ENCODE measurements at regions of chr18 and their contacts with region 1.

Region 1: DNA sequence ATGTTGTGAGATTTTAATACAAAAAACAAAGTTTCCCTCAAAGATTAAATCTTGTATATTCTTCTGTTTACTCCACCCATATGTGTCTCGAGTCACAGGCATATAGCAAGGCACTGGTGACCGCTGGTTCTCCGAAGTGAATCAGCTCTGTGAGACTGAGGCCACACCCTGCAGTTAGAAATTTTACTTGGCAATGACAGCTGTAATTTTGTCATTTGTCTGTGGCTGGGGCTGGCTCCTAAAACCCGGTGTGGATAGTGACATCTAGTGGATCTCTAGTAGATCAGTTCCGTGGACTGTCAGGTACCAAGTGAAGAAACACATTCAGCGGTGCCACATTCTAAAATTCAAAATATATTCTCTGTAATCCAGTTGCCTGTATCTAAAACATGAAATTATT is 278.0 kb downstream of the NEDD4L start:
- DNase-seq: peak; percentile 45 to 72 (median 70)
- H3K4me3 ChIP-seq: no peak overlapping the region
- H3K4me3 Mint-ChIP-seq: peak overlapping the region in 7 of 8 donors; percentile 36 to 88 (median 72)
- H3K27ac ChIP-seq: no peak overlapping the region
- H3K27ac Mint-ChIP-seq: peak overlapping the region; percentile 26 to 92 (median 53)
- H3K4me1 ChIP-seq: peaks cover 11% of the 10 kb centered on the region
- H3K4me1 Mint-ChIP-seq: peaks cover 12 to 21% (median 17%) of the 10 kb centered on the region in 4 donors
- H3K27me3 ChIP-seq: no peaks in the 10 kb centered on the region
- H3K27me3 Mint-ChIP-seq: peaks cover 4% of the 10 kb centered on the region in 2 donors

Region 2: DNA sequence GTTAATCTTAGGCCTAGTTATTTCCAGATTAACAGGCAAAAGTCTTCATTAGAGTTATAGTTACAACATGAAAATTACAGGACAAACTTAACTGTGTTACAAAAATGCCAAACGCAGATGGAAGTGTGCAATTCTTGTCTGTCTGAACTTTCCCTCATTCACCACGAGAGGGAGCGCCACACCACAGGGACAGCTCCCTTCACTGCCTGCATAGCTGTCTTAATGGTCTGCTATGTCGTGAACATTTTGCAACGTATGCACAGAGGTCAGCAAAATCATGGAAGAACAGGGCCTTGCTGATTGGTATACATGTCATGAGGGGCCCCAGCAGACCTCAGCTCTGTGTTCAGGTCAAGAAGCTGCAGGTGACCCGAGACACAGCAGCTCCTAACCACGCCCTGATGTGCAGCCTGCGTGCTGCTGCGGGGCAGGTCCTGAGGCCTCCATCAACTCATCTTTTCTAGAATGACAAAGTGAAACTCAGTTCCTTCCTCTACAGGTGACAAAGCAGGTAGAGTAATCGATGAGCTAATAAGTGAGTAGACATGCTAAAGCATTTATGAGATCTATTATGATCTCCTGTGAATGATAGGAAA is 440.1 kb before region 1 on chr18:
- CTCF ChIA-PET with region 1: no interaction called
- POLR2A ChIA-PET with region 1: no interaction called
- intact Hi-C with region 1: loop called (anchors 10 kb)
- DNase-seq: peak in 4 of 5 donors; percentile 19 to 38 (median 30)
- H3K4me3 ChIP-seq: no peak overlapping the region
- H3K4me3 Mint-ChIP-seq: no peak overlapping the region
- H3K27ac ChIP-seq: no peak overlapping the region
- H3K27ac Mint-ChIP-seq: no peak overlapping the region
- H3K4me1 ChIP-seq: no peaks in the 10 kb centered on the region
- H3K4me1 Mint-ChIP-seq: peaks cover 0 to 3% (median 0%) of the 10 kb centered on the region in 4 donors
- H3K27me3 ChIP-seq: no peaks in the 10 kb centered on the region
- H3K27me3 Mint-ChIP-seq: peaks cover 2 to 11% of the 10 kb centered on the region in 2 donors

Region 3: DNA sequence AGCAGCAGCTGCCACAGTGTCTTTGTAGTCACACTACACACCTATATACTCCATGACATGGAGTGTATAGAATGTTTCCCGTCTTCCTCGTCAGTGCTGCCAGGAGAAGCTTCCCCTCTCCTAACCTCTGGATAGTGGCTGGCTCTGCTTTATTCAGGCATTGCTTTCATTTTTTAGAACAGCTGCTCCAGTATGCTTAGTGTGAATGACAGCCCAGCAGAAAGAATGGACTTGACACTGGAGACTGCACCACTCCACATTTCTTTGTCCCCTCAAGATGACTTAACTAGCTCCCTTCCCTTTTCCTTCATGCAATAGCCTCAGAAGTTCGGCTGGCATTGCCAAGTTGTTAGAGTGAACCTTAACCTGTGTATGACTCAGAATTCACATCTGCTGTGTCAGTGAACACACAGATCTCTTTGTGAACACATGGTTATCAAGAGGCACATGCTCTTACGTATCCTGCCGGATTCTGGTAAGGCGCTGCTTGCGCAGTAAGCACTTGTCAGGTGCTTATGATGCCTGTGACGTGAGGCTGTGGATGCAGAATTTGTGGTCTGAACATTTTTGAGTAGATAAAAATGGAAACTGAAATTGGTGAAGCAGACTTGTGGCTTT is 204.1 kb before region 1 on chr18:
- CTCF ChIA-PET with region 1: no interaction called
- POLR2A ChIA-PET with region 1: no interaction called
- intact Hi-C with region 1: loop called (anchors 1 kb)
- DNase-seq: no peak
- H3K4me3 ChIP-seq: no peak overlapping the region
- H3K4me3 Mint-ChIP-seq: no peak overlapping the region
- H3K27ac ChIP-seq: no peak overlapping the region
- H3K27ac Mint-ChIP-seq: no peak overlapping the region
- H3K4me1 ChIP-seq: no peaks in the 10 kb centered on the region
- H3K4me1 Mint-ChIP-seq: peaks cover 0 to 2% (median 0%) of the 10 kb centered on the region in 4 donors
- H3K27me3 ChIP-seq: no peaks in the 10 kb centered on the region
- H3K27me3 Mint-ChIP-seq: peaks cover 5 to 12% of the 10 kb centered on the region in 2 donors

Region 4: DNA sequence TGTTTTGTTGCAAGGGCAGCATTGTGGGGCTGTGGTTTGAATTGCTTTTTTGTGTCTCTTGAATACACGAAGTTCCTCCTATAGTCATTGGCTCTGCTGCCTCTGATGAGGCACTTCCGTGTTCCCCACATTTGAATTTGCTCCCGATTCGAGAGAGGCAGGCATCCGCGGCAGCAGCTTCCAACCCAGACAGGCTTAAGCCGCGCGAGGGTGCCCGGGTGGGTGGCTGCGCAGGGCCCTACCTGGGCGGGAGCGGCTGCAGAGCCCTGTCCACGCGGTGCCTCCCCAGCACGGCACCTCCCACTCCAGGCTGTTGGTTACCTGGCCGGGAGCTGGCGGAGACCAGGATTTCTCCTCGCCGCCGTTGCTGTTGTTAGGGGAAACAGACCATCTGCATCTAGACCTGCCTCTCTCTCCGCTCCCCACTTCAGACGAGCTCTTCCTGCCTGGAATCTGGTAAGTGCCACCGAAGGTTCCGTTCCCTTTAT is 126.7 kb before region 1 on chr18:
- CTCF ChIA-PET with region 1: no interaction called
- POLR2A ChIA-PET with region 1: no interaction called
- intact Hi-C with region 1: loop called (anchors 5 kb)
- DNase-seq: peak; percentile 11 to 37 (median 22)
- H3K4me3 ChIP-seq: peak overlapping the region in 1 of 2 donors; percentile 37
- H3K4me3 Mint-ChIP-seq: peak overlapping the region; percentile 76 to 91 (median 84)
- H3K27ac ChIP-seq: no peak overlapping the region
- H3K27ac Mint-ChIP-seq: peak overlapping the region in 3 of 7 donors; percentile 76 to 85 (median 77)
- H3K4me1 ChIP-seq: no peaks in the 10 kb centered on the region
- H3K4me1 Mint-ChIP-seq: peaks cover 6 to 27% (median 14%) of the 10 kb centered on the region in 4 donors
- H3K27me3 ChIP-seq: no peaks in the 10 kb centered on the region
- H3K27me3 Mint-ChIP-seq: peaks cover 3 to 7% of the 10 kb centered on the region in 2 donors

Measured in CD4-positive, alpha-beta memory T cell (primary cell).